ENCODE measurements at regions of chr5 and their contacts with region 1.

Region 1: DNA sequence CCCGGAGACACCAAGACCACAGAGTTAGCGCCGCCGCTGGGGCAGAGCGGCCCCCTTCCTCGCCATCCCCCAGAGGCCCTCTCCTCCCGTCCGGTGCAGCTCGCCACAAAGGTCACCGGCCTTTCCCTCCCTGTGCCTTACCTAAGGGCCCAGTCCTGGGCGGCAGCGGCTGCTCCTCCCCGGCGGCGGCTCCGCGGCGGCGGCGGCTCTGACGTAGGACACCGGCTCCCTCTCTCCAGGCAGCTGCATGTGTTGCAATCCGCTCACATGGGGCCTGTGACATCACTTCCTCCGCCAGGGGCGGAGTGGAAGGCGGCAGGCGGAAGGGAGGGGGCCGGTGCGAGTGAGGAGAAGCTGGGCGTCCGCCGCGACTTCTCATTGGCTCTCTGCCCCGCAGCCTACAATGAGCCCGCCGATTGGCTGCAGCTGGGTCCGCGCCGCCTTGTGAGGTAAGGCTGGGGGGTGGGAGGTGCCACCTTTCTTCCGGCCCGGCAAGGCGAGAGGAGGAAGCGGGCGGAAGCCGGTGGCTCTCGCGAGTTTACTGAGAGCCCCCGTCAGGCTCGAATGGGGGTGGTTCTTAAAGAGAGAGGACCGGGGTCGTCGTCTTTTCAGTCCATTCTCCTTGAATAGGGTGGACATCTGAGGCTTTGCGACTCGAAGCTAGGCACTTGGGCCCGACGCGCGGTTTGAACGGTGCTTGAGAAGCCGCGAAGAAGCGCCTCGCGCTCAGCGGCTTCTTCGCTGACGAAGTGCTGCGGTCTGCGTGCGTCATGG is at the start of gene ETF1:
- DNase-seq: peak; percentile 100
- ATAC-seq: peak; percentile 95
- H3K4me3 Mint-ChIP-seq: peak within 1 kb of the TSS; percentile 100
- H3K27ac Mint-ChIP-seq: peak within 1 kb of the TSS; percentile 99
- H3K4me1 Mint-ChIP-seq: peaks cover 38% of the 10 kb centered on the region
- H3K27me3 Mint-ChIP-seq: no peaks in the 10 kb centered on the region
- CTCF ChIP-seq: no peak
- total RNA-seq, gene ETF1: 110 to 137 TPM (median 115 TPM) in 3 replicates

Region 2: GRCh38 chr5:138464008-138464387 is 79.1 kb before region 1 on chr5:
- CTCF ChIA-PET with region 1: interaction called, 12 read pairs
- POLR2A ChIA-PET with region 1: interaction called, 13 read pairs
- DNase-seq: peak; percentile 92
- ATAC-seq: peak; percentile 61
- H3K4me3 Mint-ChIP-seq: peak overlapping the region; percentile 83
- H3K27ac Mint-ChIP-seq: peak overlapping the region; percentile 94; the same call in 1 of the 2 replicates
- H3K4me1 Mint-ChIP-seq: 0 out of 2 replicates have a peak, but pooled peaks cover 7% of the 10 kb centered on the region
- H3K27me3 Mint-ChIP-seq: peaks cover 34% of the 10 kb centered on the region
- CTCF ChIP-seq: peak; percentile 83

Region 3: DNA sequence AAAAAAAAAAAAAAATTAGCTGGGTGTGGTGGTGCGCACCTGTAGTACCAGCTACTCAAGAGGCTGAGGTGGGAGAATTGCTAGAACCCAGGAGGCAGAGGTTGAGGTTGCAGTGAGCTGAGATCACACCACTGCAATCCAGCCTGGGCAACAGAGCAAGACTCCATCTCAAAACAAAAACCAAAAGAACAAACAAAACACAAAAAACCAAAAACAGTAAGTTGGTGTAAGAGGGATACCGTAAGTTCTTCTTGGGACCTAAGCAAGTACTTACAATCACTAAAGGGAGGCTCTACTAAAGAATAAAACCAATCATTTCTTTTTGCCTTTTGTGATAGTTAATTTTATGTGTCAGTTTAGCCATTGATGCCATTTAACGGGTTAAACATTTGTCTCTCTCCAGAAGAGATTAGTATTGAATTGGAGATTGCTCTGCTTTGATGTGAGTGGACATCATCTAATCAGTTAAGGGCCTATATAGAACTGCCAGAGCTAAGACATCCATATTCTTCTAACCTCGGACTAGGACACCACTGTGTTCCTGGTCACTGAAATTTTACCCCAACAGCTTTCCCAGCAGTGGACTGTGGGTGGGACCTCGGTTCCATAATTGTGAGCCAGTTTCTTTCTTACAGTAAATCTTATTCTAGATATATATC is 10.4 kb after region 1 on chr5:
- CTCF ChIA-PET with region 1: interaction called, 3 read pairs
- POLR2A ChIA-PET with region 1: interaction called, 28 read pairs
- DNase-seq: no peak
- ATAC-seq: no peak
- H3K4me3 Mint-ChIP-seq: no peak overlapping the region
- H3K27ac Mint-ChIP-seq: no peak overlapping the region
- H3K4me1 Mint-ChIP-seq: no peaks in the 10 kb centered on the region
- H3K27me3 Mint-ChIP-seq: no peaks in the 10 kb centered on the region
- CTCF ChIP-seq: no peak

Region 4: GRCh38 chr5:138575194-138576015 is 32.3 kb after region 1 on chr5 and contains the start of gene HSPA9:
- CTCF ChIA-PET with region 1: interaction called, 16 read pairs
- POLR2A ChIA-PET with region 1: interaction called, 20 read pairs
- DNase-seq: peak; percentile 91
- ATAC-seq: peak; percentile 83
- H3K4me3 Mint-ChIP-seq: peak within 1 kb of the TSS; percentile 97
- H3K27ac Mint-ChIP-seq: peak within 1 kb of the TSS; percentile 100
- H3K4me1 Mint-ChIP-seq: peaks cover 10% of the 10 kb centered on the region
- H3K27me3 Mint-ChIP-seq: no peaks in the 10 kb centered on the region; the same call in 1 of the 2 replicates
- CTCF ChIP-seq: no peak
- total RNA-seq, gene HSPA9: 313 to 414 TPM (median 328 TPM) in 3 replicates

Measured in WTC11 (cell line).